ENCODE measurements at regions of chr6 and their contacts with region 1.

Region 1: GRCh38 chr6:227074-227782 is 65.1 kb upstream of the DUSP22 start:
- DNase-seq: no peak
- H3K4me3 Mint-ChIP-seq: no peak overlapping the region
- H3K27ac Mint-ChIP-seq: peak overlapping the region; percentile 28
- H3K4me1 Mint-ChIP-seq: peaks cover 76% of the 10 kb centered on the region
- H3K27me3 Mint-ChIP-seq: no peaks in the 10 kb centered on the region

Region 2: GRCh38 chr6:209432-210103 is 17.7 kb before region 1 on chr6:
- intact Hi-C with region 1: loop called (anchors 2 kb)
- DNase-seq: peak; percentile 46
- H3K4me3 Mint-ChIP-seq: peak overlapping the region; percentile 6
- H3K27ac Mint-ChIP-seq: no peak overlapping the region
- H3K4me1 Mint-ChIP-seq: peaks cover 33% of the 10 kb centered on the region
- H3K27me3 Mint-ChIP-seq: peaks cover 2% of the 10 kb centered on the region

Region 3: GRCh38 chr6:251920-252319 is 24.7 kb after region 1 on chr6:
- intact Hi-C with region 1: loop called (anchors 1 kb)
- DNase-seq: no peak
- H3K4me3 Mint-ChIP-seq: no peak overlapping the region
- H3K27ac Mint-ChIP-seq: peak overlapping the region; percentile 56
- H3K4me1 Mint-ChIP-seq: peaks cover 34% of the 10 kb centered on the region
- H3K27me3 Mint-ChIP-seq: peaks cover 2% of the 10 kb centered on the region

Region 4: DNA sequence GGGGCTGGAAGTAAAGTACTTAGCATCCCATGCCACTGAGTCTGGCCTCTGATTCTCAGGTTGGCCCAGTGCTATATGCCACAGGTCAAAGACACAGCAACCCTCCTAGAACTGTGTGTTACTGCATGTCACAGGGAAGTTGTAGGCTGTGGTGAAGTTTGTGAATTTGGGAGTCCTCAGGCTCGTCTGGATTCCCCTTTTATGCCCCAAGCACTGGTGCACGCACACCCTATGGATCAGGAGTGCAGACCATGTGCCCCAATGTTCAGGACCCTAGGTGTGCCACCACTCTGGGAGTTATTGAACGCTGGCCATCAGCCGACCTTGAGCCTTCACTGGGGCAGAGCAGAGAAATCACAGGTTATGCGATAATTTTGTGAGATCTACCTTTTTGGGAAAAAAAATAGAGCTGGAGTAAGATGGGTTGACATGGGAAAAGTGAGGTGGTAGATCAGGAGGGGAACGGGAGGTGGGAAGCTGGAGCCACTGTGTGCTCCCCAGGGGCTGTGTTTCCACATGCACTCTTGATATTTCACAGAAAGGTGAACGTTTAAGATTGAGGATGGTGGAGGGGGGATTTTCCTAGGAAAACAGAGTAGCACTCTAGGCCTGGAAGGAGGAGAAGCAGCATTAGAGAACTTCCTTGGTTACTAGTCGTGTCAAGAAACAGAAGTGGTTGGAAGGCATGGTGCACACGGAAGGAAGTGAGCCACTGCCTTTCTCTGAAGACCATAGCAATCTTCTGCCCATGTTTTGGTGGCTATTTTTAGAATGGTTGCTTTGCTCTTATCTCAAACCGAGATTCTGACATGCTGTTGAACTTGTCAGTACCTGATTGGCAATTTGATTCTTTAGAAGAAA is 109.2 kb after region 1 on chr6:
- intact Hi-C with region 1: loop called (anchors 2 kb)
- DNase-seq: peak; percentile 23
- H3K4me3 Mint-ChIP-seq: peak overlapping the region; percentile 35
- H3K27ac Mint-ChIP-seq: peak overlapping the region; percentile 74
- H3K4me1 Mint-ChIP-seq: peaks cover 55% of the 10 kb centered on the region
- H3K27me3 Mint-ChIP-seq: no peaks in the 10 kb centered on the region

Measured in activated T-helper 2 cell treated with anti-CD3 and anti-CD28 coated beads, Interferon-gamma antibody, Interleukin-2, Interleukin-4, amounts not matched to agents 10 μg/mL and 5 μg/mL and 100 μg/mL, durations not matched to agents 14 hours and 24 hours and 36 hours (primary cell).